ENCODE measurements at regions of chr15 and their contacts with region 1.

Region 1: DNA sequence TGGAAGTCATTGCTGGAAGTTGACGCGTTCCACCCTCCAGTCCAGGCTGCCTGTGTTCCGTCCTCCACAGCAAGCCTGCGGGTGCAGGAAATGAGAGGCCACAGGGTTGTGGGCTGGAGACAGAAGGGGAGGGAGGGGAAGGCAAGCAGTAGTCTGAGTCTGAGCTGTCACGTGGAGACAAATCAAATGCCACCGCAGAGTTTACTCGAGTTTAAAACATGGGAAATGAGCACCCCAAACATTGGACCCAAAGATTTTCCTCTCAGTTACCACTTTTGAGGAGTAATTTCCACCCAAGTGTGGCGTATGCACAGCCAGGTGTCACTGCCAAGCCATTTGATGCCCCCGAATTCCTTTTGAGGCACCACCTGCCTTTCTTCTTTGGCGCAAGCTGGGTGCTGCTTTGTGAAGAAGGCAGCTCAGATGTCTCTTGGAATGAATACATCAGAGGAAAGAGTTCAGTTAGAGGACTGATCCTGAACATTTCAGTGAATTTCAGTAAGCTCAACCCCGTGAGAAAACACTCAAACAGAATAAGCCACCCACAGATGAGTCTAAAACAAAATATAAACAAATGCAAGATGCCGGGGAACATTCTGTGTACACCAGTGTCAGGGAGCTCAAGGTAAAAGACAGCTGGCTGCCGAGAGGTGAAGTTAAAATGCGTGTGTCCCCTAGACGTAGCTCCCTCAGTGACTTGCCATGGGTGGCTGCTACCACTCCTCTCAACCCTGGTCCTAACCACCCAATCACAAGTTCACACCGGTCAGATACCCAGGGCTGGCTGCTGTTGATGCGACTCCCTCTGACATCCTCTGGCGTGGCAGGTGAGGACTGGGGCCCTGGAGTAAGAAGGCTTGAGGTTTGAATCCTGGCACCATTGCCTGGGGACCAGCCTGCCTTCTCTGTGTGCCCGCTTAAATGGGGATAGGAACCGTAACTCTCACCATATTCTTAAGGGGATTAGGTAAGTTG is 203.8 kb downstream of the UACA start:
- DNase-seq: peak; percentile 56 to 87 (median 66)
- ATAC-seq: peak; percentile 82
- H3K4me3 ChIP-seq: peak overlapping the region; percentile 53
- H3K4me3 Mint-ChIP-seq: no peak overlapping the region
- H3K27ac ChIP-seq: peak overlapping the region; percentile 16 to 42
- H3K27ac Mint-ChIP-seq: no peak overlapping the region
- H3K4me1 ChIP-seq: peaks cover 69% of the 10 kb centered on the region
- H3K4me1 Mint-ChIP-seq: peaks cover 4% of the 10 kb centered on the region
- H3K27me3 ChIP-seq: no peaks in the 10 kb centered on the region
- H3K27me3 Mint-ChIP-seq: no peaks in the 10 kb centered on the region
- CTCF ChIP-seq: no peak

Region 2: DNA sequence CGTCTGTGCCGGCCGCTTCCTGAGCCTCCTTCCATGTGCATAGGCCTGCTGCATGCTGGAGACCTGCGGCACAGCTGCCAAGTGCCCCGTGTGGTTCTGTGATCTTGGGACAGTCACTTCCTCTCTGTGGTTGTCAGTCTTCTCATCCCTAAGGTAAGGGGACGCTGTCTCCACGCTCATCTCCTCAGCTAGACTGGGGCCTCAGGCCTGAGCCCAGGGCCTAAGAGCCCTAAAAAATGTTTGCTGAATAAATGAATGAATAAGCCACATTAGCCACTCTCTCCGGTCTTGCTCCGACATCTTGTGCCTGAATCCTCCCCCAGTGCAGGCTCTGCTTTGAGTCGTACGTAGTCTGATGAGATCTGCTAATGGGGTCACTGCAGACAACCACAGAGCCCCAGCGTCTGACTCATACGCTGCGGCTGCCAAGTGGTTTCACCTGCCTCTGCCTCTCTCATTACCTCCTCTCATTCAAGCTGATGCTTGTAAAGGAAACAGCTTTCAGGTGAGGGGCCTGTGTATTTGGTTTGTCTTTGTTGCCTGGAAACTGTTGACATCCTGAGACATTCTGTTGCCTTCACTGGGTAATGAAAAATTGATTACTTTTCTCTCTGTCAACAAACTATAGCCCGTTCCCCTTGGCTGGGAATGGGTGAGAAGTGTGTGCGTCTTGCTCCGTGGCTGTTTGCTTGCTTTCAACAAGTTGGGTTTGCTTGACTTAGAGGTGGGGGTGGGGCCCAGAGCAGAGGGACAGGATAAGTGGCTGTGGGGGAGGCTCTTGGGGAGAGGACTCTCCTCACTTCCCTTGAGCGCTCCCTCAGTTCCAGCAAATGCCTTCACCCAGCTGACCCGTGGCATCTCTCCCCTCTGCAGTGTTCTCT is 1091.1 kb before region 1 on chr15:
- CTCF ChIA-PET with region 1: no interaction called
- POLR2A ChIA-PET with region 1: no interaction called
- intact Hi-C with region 1: loop called in 1 of 2 experiments (anchors 5 kb)
- DNase-seq: peak; percentile 74 to 97 (median 81)
- ATAC-seq: peak; percentile 88
- H3K4me3 ChIP-seq: peak overlapping the region; percentile 15
- H3K4me3 Mint-ChIP-seq: peak overlapping the region; percentile 70
- H3K27ac ChIP-seq: peak overlapping the region; percentile 91
- H3K27ac Mint-ChIP-seq: peak overlapping the region; percentile 90
- H3K4me1 ChIP-seq: peaks cover 39% of the 10 kb centered on the region
- H3K4me1 Mint-ChIP-seq: peaks cover 29% of the 10 kb centered on the region
- H3K27me3 ChIP-seq: no peaks in the 10 kb centered on the region
- H3K27me3 Mint-ChIP-seq: no peaks in the 10 kb centered on the region
- CTCF ChIP-seq: no peak

Region 3: GRCh38 chr15:69755551-69756310 is 803.8 kb before region 1 on chr15:
- CTCF ChIA-PET with region 1: no interaction called
- POLR2A ChIA-PET with region 1: no interaction called
- intact Hi-C with region 1: loop called in 1 of 2 experiments (anchors 10 kb)
- DNase-seq: peak; percentile 29 to 88 (median 68)
- ATAC-seq: peak; percentile 57
- H3K4me3 ChIP-seq: peak overlapping the region; percentile 15
- H3K4me3 Mint-ChIP-seq: peak overlapping the region; percentile 73
- H3K27ac ChIP-seq: no peak overlapping the region
- H3K27ac Mint-ChIP-seq: peak overlapping the region; percentile 77
- H3K4me1 ChIP-seq: peaks cover 71% of the 10 kb centered on the region
- H3K4me1 Mint-ChIP-seq: peaks cover 94% of the 10 kb centered on the region
- H3K27me3 ChIP-seq: no peaks in the 10 kb centered on the region
- H3K27me3 Mint-ChIP-seq: peaks cover 6% of the 10 kb centered on the region
- CTCF ChIP-seq: no peak

Region 4: DNA sequence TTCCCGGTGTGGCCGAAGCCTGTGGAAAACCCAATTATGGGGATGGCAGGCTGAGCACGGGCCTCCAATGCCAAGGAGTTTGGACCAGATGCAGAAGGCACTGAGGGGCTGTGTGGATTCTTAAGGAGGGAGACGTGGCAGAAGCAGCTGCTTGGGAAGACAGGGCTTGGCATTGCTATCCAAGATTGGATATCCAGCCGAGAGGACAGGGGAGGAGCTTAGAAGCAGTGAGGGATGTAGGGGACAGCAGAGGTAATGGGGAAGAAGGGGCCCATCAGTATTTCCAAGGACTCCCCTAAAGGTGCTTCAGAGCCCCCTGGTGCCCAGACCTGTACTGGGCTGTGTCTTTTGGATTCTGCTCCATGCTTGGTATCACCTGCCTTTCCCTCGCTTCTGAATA is 349.0 kb before region 1 on chr15:
- CTCF ChIA-PET with region 1: no interaction called
- POLR2A ChIA-PET with region 1: no interaction called
- intact Hi-C with region 1: no loop called
- DNase-seq: peak in 2 of 14 experiments; percentile 10 to 20
- ATAC-seq: no peak
- H3K4me3 ChIP-seq: no peak overlapping the region
- H3K4me3 Mint-ChIP-seq: no peak overlapping the region
- H3K27ac ChIP-seq: no peak overlapping the region
- H3K27ac Mint-ChIP-seq: no peak overlapping the region
- H3K4me1 ChIP-seq: no peaks in the 10 kb centered on the region
- H3K4me1 Mint-ChIP-seq: no peaks in the 10 kb centered on the region
- H3K27me3 ChIP-seq: no peaks in the 10 kb centered on the region
- H3K27me3 Mint-ChIP-seq: no peaks in the 10 kb centered on the region
- CTCF ChIP-seq: no peak

Region 5: GRCh38 chr15:70528270-70528706 is 31.3 kb before region 1 on chr15:
- CTCF ChIA-PET with region 1: no interaction called
- POLR2A ChIA-PET with region 1: interaction called, 24 read pairs
- intact Hi-C with region 1: loop called in 1 of 2 experiments (anchors 5 kb)
- DNase-seq: peak; percentile 33 to 91 (median 44)
- ATAC-seq: peak; percentile 89
- H3K4me3 ChIP-seq: peak overlapping the region; percentile 24
- H3K4me3 Mint-ChIP-seq: peak overlapping the region; percentile 71
- H3K27ac ChIP-seq: peak overlapping the region; percentile 14 to 66
- H3K27ac Mint-ChIP-seq: peak overlapping the region; percentile 89
- H3K4me1 ChIP-seq: peaks cover 71% of the 10 kb centered on the region
- H3K4me1 Mint-ChIP-seq: peaks cover 83% of the 10 kb centered on the region
- H3K27me3 ChIP-seq: no peaks in the 10 kb centered on the region
- H3K27me3 Mint-ChIP-seq: no peaks in the 10 kb centered on the region
- CTCF ChIP-seq: no peak

Region 6: GRCh38 chr15:70670680-70671079 is 111.1 kb after region 1 on chr15:
- CTCF ChIA-PET with region 1: no interaction called
- POLR2A ChIA-PET with region 1: no interaction called
- intact Hi-C with region 1: loop called in 1 of 2 experiments (anchors 5 kb)
- DNase-seq: peak in 3 of 14 experiments; percentile 29 to 37 (median 31)
- ATAC-seq: no peak
- H3K4me3 ChIP-seq: no peak overlapping the region
- H3K4me3 Mint-ChIP-seq: no peak overlapping the region
- H3K27ac ChIP-seq: no peak overlapping the region
- H3K27ac Mint-ChIP-seq: no peak overlapping the region
- H3K4me1 ChIP-seq: peaks cover 8% of the 10 kb centered on the region
- H3K4me1 Mint-ChIP-seq: peaks cover 24% of the 10 kb centered on the region
- H3K27me3 ChIP-seq: peaks cover 3 to 8% of the 10 kb centered on the region in 2 experiments
- H3K27me3 Mint-ChIP-seq: peaks cover 4% of the 10 kb centered on the region
- CTCF ChIP-seq: peak; percentile 62

Region 7: GRCh38 chr15:72063186-72063585 is 1503.6 kb after region 1 on chr15:
- CTCF ChIA-PET with region 1: no interaction called
- POLR2A ChIA-PET with region 1: no interaction called
- intact Hi-C with region 1: no loop called
- DNase-seq: no peak
- ATAC-seq: no peak
- H3K4me3 ChIP-seq: no peak overlapping the region
- H3K4me3 Mint-ChIP-seq: no peak overlapping the region
- H3K27ac ChIP-seq: no peak overlapping the region
- H3K27ac Mint-ChIP-seq: no peak overlapping the region
- H3K4me1 ChIP-seq: peaks cover 8% of the 10 kb centered on the region
- H3K4me1 Mint-ChIP-seq: peaks cover 11% of the 10 kb centered on the region
- H3K27me3 ChIP-seq: no peaks in the 10 kb centered on the region
- H3K27me3 Mint-ChIP-seq: no peaks in the 10 kb centered on the region
- CTCF ChIP-seq: no peak

Measured in CD4-positive, alpha-beta T cell (primary cell).